ENCODE measurements at regions of chr10 and their contacts with region 1.

Region 1: DNA sequence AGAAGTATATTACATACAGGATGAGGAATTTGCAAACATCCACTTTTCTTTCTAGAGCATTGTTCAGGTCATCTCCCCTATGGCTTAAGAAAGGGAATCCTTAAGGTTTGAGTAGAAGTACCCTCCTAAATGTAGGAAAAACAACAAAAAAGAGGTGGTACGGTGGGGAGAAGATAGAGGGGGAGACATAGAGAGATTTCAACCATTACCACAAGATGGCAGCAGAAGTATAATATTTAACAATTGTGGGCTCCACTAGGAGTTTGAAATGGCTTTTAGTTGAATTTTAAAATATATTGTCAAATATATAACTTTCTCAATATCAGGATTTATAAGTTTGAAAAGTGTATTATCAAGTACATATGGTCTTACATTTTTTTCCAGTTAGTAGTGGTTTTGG is 72.7 kb upstream of the PRKG1 start:
- DNase-seq: no peak
- H3K4me3 ChIP-seq: no peak overlapping the region
- H3K27ac ChIP-seq: no peak overlapping the region
- H3K4me1 ChIP-seq: no peaks in the 10 kb centered on the region
- H3K27me3 ChIP-seq: no peaks in the 10 kb centered on the region
- CTCF ChIP-seq: peak in 3 of 4 experiments; percentile 36 to 50 (median 47)
- POLR2A ChIP-seq: no peak

Region 2: DNA sequence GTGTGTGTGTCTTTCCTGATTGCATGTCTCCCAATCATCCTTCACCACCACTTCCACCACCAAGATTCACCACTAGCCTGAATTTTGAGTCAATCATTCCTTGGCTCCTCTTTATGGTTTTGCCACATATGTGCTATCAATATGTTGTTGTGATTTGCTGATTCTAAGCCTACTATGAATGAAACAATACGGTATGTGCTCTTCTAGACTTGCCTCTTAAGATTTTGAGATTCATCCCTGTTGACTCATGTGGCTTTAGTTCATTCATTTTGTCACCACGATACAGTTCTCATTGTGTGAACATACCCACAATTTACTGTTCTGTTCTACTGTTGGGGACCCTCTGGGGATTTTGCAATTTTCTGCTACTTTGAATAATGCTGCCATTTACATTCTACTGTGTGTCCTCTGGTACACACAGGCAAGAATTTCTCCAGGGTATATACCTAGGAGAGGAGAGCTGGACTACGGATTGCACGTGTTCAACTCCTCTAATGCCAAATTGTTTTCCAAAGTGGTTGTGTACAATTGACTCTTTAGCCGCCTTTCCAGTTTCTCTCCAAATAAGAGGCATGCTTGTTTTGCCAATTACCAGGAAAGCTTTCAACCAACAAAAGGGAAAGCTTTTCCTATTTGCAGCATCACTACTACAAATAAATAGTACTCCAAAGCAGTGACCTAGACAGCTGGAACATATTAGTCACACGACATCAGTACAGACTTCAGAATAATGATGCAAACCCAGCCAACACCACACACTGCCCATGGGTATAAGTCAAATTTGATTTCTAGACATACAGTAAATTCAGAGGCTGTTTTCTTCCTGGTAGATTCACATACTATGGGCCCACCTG is 407.8 kb before region 1 on chr10:
- intact Hi-C with region 1: no loop called
- DNase-seq: no peak
- H3K4me3 ChIP-seq: no peak overlapping the region
- H3K27ac ChIP-seq: no peak overlapping the region
- H3K4me1 ChIP-seq: no peaks in the 10 kb centered on the region
- H3K27me3 ChIP-seq: no peaks in the 10 kb centered on the region
- CTCF ChIP-seq: no peak
- POLR2A ChIP-seq: no peak

Region 3: DNA sequence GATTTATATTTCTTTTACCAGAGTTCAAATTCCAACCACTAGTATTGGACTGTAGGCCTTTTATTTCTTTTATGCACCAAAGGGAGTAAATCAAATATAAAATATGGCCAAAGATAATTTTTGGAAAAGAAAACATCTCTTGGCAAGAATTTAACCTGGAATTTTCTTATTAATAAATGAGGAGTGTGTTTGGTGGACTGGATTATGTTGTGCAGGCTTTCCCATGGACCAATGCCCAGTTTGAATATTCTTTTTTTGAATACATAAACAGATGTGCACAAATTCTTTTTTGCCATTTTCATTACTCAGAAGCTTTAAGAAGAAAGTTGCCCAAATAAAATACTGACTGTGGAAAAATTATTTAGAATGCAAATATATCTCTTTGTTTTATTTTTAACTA is 50.6 kb after region 1 on chr10:
- intact Hi-C with region 1: loop called (anchors 10 kb)
- DNase-seq: no peak
- H3K4me3 ChIP-seq: no peak overlapping the region
- H3K27ac ChIP-seq: no peak overlapping the region
- H3K4me1 ChIP-seq: no peaks in the 10 kb centered on the region
- H3K27me3 ChIP-seq: no peaks in the 10 kb centered on the region
- CTCF ChIP-seq: no peak
- POLR2A ChIP-seq: no peak

Region 4: GRCh38 chr10:51129946-51130544 is 128.5 kb after region 1 on chr10:
- intact Hi-C with region 1: no loop called
- DNase-seq: no peak
- H3K4me3 ChIP-seq: no peak overlapping the region
- H3K27ac ChIP-seq: no peak overlapping the region
- H3K4me1 ChIP-seq: no peaks in the 10 kb centered on the region
- H3K27me3 ChIP-seq: no peaks in the 10 kb centered on the region
- CTCF ChIP-seq: no peak
- POLR2A ChIP-seq: no peak

Measured in prostate gland (tissue), 2 donors.